Esophagus squamous epithelium (tissue), 5 donors: ENCODE measurements at regions of chr10 and their contacts with region 1.

Region 1: GRCh38 chr10:91632671-91633550 is at the start of gene PPP1R3C:
- DNase-seq: no peak
- H3K4me3 ChIP-seq: peak within 1 kb of the TSS; percentile 44 to 69 (median 59)
- H3K27ac ChIP-seq: peak within 1 kb of the TSS; percentile 73 to 88 (median 81)
- H3K4me1 ChIP-seq: peaks cover 0 to 69% (median 5%) of the 10 kb centered on the region in 3 donors
- H3K27me3 ChIP-seq: peaks cover 0 to 8% (median 0%) of the 10 kb centered on the region in 4 donors
- CTCF ChIP-seq: peak in 1 of 6 experiments; percentile 21
- POLR2A ChIP-seq: peak in 2 of 4 donors; percentile 65 to 78
- total RNA-seq, gene PPP1R3C: 8.8 to 70.8 (median 47.9) TPM

Region 2: DNA sequence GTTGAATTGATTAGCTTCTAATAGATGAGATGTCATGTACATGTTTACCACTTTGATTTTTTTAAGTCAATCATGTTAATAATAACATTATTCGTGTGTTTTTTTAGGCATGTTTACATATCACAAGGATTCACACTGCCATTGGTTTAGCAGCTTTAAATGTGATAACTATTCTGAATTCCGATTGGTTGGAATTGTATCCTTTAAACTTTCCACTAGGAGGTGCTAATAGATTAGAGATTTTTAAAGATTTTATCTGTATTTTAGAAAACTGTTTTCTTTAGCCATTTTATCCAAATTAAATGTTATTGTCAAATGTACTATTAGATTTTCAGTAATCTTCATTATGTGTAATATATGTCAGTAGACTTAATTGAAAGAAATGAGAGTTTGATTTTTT is 139.6 kb before region 1 on chr10:
- intact Hi-C with region 1: loop called (anchors 5 kb)
- DNase-seq: no peak
- H3K4me3 ChIP-seq: no peak overlapping the region
- H3K27ac ChIP-seq: no peak overlapping the region
- H3K4me1 ChIP-seq: no peaks in the 10 kb centered on the region
- H3K27me3 ChIP-seq: no peaks in the 10 kb centered on the region
- CTCF ChIP-seq: peak in 5 of 6 experiments; percentile 42 to 73 (median 46)
- POLR2A ChIP-seq: no peak

Region 3: DNA sequence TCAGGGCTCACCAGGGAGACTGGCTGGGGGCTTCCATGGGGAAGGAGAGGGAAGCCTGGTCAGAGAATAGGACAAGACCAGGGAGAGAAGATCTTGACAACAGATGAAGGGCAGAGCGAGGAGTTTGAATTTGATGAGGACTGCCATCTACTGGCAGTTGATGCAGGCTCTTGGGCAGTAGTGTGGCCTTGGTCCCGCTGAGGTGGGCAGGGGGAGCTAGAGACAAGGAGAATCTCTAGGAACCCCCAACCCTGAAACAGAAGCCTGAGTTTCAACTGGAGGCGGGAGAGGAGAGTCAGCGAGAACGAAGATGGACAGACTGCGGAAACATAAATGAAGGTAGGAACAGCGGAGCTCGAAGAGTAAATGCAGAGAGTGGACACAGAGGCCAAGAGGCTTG is 81.1 kb before region 1 on chr10:
- intact Hi-C with region 1: loop called (anchors 10 kb)
- DNase-seq: no peak
- H3K4me3 ChIP-seq: no peak overlapping the region
- H3K27ac ChIP-seq: no peak overlapping the region
- H3K4me1 ChIP-seq: peaks cover 6 to 53% (median 17%) of the 10 kb centered on the region in 3 donors
- H3K27me3 ChIP-seq: no peaks in the 10 kb centered on the region
- CTCF ChIP-seq: peak in 5 of 6 experiments; percentile 28 to 54 (median 38)
- POLR2A ChIP-seq: no peak

Region 4: DNA sequence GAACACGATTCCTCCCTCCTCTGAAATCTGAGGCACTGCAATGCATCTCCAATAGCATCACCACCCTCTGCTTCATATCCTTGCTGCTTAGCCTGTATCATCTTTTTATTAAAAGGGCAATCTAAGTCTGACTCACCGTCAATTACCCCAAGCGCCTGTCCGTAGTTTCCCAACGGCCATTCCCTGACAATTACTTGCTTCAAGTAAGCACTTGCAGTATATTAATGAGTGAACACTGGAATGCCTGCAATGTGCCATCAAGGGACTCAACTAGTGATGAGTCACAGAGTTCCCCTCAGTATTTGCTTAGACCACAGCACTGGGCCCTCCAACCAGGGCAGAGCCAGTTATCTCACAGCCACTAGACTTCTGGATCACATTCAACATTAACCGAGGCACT is 19.5 kb after region 1 on chr10:
- intact Hi-C with region 1: no loop called
- DNase-seq: no peak
- H3K4me3 ChIP-seq: no peak overlapping the region
- H3K27ac ChIP-seq: peak overlapping the region in 3 of 4 donors; percentile 38 to 54 (median 45)
- H3K4me1 ChIP-seq: peaks cover 0 to 26% (median 4%) of the 10 kb centered on the region in 3 donors
- H3K27me3 ChIP-seq: no peaks in the 10 kb centered on the region
- CTCF ChIP-seq: no peak
- POLR2A ChIP-seq: no peak

Region 5: DNA sequence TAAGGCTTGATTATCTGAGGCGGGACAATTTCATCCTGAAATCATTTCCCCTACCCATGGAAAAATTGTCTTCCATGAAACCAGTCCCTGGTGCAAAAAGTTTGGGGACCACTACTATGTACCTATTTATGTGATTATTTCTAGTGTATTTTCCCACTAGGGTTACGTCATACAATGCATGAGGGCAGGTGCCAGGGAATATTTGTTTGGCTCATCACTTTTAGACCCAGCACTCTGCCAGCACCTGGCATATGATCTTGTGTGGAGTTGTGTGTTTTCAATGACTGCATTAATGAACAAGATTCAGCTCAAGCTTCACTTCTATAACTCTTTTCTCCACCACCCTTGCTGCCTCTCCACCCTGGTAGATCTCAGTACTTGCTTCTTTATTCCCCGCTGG is 92.0 kb after region 1 on chr10:
- intact Hi-C with region 1: no loop called
- DNase-seq: no peak
- H3K4me3 ChIP-seq: no peak overlapping the region
- H3K27ac ChIP-seq: no peak overlapping the region
- H3K4me1 ChIP-seq: no peaks in the 10 kb centered on the region
- H3K27me3 ChIP-seq: no peaks in the 10 kb centered on the region
- CTCF ChIP-seq: no peak
- POLR2A ChIP-seq: no peak

Region 6: DNA sequence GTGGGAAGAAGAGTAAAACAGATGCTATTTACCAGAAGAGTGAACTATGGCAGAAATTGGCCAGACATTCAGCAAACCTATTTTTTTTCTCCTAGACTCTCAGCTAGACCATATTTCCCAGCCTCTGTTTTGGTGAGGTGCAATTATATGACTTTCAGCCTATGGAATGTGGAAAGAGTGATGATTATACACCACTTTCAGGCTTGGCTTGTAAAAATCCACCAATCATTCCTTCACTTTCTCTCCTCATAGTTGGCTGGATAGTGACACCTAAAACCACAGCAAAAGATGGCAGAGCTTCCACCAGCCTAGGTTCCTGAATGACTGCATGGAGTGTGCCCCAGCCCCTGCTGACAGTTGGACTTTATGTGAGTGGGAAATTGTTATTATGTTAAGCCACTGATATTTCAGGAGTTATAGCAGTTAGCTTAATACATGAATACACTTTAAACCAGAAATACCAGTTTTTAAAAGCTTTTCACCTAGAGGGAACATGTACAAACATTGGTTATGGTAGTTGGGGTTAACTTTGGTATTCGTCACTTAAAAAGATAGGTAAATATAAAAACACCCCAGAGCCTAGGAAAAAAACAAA is 146.2 kb after region 1 on chr10:
- intact Hi-C with region 1: no loop called
- DNase-seq: no peak
- H3K4me3 ChIP-seq: no peak overlapping the region
- H3K27ac ChIP-seq: peak overlapping the region in 2 of 4 donors; percentile 16 to 46
- H3K4me1 ChIP-seq: peaks cover 0 to 18% (median 4%) of the 10 kb centered on the region in 3 donors
- H3K27me3 ChIP-seq: no peaks in the 10 kb centered on the region
- CTCF ChIP-seq: no peak
- POLR2A ChIP-seq: no peak